GM10248 (cell line): ENCODE measurements at regions of chr13 and their contacts with region 1.

Region 1: GRCh38 chr13:49110122-49110912 is 109.8 kb upstream of the MLNR start:
- DNase-seq: peak; percentile 54
- CTCF ChIP-seq: no peak

Region 2: DNA sequence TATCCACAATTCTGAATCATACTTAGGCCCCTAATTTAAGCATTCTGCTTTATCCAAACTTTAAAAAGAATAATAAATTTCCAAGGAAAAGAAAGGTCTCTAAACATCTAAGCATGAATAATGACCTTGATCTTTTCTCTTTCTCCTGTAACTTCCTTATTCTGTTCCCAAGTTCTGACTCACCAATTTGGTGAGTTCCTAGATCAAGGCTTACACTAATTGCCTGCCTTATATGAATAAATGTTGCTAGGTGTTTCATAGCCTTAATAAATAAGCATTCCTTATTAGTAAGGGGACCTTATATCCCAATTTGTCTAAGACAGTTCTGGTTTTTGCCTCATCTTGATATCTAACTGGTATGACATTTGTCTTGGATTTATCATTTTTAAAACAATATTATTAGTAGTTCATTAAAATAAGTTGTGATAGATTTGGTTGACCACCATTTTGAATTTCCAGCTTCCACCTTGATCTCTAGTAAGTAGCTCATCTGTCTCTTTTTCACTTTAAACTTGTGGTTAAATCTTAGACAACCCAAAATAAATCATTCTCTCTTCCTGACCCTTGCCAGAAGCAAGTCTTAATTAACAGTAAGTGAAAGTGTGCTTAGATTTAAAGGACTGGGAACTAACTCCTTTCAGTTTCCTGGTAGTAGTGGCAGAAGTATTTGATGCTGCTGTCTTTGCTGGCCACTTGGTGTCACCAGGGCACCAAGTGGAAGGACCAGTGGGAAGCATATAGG is 11.4 kb before region 1 on chr13:
- CTCF ChIA-PET with region 1: interaction called, 11 read pairs
- POLR2A ChIA-PET with region 1: interaction called, 3 read pairs
- DNase-seq: no peak
- CTCF ChIP-seq: peak; percentile 53